Gastrocnemius medialis (tissue), 4 donors: ENCODE measurements at regions of chr2 and their contacts with region 1.

Region 1: GRCh38 chr2:33577668-33578067 is 21.4 kb downstream of the FAM98A start:
- DNase-seq: no peak
- ATAC-seq: no peak
- H3K4me3 ChIP-seq: no peak overlapping the region
- H3K27ac ChIP-seq: no peak overlapping the region
- H3K4me1 ChIP-seq: no peaks in the 10 kb centered on the region
- H3K27me3 ChIP-seq: no peaks in the 10 kb centered on the region
- CTCF ChIP-seq: no peak
- POLR2A ChIP-seq: no peak

Region 2: GRCh38 chr2:33475224-33476130 is 102.2 kb before region 1 on chr2:
- in situ Hi-C with region 1: loop called in 1 of 4 experiments (anchors 10 kb)
- intact Hi-C with region 1: loop called (anchors 5 kb)
- DNase-seq: peak; percentile 72 to 78
- ATAC-seq: peak; percentile 76 to 77
- H3K4me3 ChIP-seq: peak overlapping the region; percentile 69 to 99 (median 78)
- H3K27ac ChIP-seq: peak overlapping the region; percentile 90 to 100 (median 93)
- H3K4me1 ChIP-seq: peaks cover 48 to 52% of the 10 kb centered on the region in 2 donors
- H3K27me3 ChIP-seq: no peaks in the 10 kb centered on the region
- CTCF ChIP-seq: peak; percentile 75 to 91 (median 87)
- POLR2A ChIP-seq: no peak